T-cell (primary cell): ENCODE measurements at regions of chr4 and their contacts with region 1.

Region 1: GRCh38 chr4:169369634-169370033 is 98.9 kb upstream of the SH3RF1 start:
- DNase-seq: no peak
- ATAC-seq: no peak
- H3K4me3 ChIP-seq: no peak overlapping the region
- H3K4me3 Mint-ChIP-seq: no peak overlapping the region
- H3K27ac ChIP-seq: no peak overlapping the region
- H3K27ac Mint-ChIP-seq: no peak overlapping the region
- H3K4me1 ChIP-seq: no peaks in the 10 kb centered on the region
- H3K4me1 Mint-ChIP-seq: no peaks in the 10 kb centered on the region
- H3K27me3 ChIP-seq: no peaks in the 10 kb centered on the region
- H3K27me3 Mint-ChIP-seq: peaks cover 0 to 3% of the 10 kb centered on the region in 2 donors

Region 2: DNA sequence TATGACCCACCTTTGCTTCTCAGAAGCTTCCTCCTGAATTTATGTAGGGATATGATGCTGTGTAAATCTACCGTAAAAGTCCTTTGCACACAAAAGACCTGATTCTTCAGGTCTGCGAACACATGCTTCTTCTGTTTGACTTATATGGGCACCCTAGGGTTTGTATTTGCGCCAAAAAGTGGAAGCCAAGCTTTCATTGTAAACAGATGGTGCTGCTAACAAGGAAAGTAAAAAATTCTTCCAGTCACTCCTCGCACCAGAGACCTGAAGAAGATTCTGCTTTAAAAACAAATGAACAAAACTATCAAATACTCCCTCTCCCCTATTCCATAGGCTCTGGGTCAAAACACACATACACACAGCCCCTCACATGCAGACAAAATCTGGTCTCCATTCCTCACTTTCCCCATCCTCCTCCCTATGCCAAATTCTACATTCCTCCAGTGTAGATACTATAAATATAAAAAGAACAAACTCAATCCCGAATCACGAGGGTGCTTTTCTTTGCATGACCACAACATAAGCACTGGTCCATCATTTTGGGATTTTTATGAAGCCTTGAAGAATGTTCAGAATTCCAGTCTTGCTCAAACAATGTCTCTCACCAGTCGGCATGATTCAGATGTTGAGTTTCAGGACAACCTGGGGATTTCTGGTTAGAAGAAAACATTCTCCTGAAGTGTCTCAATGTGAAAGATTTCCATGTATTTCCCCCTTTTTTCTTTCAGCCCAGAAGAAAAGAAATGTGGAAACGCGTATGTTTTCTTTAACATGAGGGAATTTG is 747.6 kb before region 1 on chr4:
- CTCF ChIA-PET with region 1: no interaction called
- POLR2A ChIA-PET with region 1: interaction called in 1 of 2 experiments, 10 read pairs
- DNase-seq: no peak
- ATAC-seq: no peak
- H3K4me3 ChIP-seq: no peak overlapping the region
- H3K4me3 Mint-ChIP-seq: no peak overlapping the region
- H3K27ac ChIP-seq: no peak overlapping the region
- H3K27ac Mint-ChIP-seq: no peak overlapping the region
- H3K4me1 ChIP-seq: no peaks in the 10 kb centered on the region
- H3K4me1 Mint-ChIP-seq: no peaks in the 10 kb centered on the region
- H3K27me3 ChIP-seq: peaks cover 0 to 5% of the 10 kb centered on the region in 2 experiments
- H3K27me3 Mint-ChIP-seq: peaks cover 30 to 31% of the 10 kb centered on the region in 2 donors